Activated CD8-positive, alpha-beta T cell treated with anti-CD3 and anti-CD28 coated beads for 36 hours (primary cell): ENCODE measurements at regions of chr6 and their contacts with region 1.

Region 1: DNA sequence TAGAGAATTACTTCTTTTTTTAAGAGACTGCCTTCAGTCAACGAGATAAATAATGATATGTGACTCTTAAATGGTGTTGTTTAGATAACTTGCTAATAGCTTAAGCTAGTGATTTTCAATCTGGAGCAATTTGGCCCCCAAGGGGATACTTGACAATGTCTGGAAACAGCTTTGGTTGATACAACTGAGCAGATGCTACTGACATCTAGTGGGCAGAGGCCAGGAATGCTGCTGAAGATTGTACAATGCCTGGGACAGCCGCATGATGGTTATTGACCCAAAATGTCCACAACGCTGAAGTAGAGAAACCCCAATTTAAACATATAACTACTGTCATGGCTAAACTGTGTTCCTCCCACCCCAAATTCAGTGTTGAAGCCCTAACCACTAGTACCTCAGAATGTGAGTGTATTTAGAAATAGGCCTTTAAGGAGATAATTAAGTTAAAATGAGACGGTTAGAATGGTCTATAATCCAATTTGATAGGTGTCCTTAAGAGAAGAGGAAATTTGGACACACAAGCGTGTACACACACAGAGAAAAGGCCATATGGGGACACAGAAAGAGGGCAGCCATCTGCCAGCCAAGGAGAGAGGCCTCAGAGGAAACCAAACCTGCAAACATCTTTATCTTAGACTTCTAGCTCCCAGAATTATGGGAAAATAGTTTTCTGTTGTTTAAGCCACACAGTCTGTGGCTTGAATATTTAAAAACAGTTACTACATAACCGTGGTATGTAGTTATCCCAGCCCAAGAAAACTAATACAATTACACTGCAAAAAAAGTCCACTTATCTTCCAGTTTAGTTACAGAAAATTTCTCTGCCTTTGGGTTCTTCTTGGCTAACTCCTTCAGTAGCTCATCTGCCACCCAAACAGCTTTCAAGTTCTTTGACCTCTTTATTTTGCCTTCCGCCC is 22.2 kb downstream of the RWDD2A start:
- DNase-seq: peak; percentile 79
- ATAC-seq: peak; percentile 99
- H3K4me3 Mint-ChIP-seq: no peak overlapping the region
- H3K27ac Mint-ChIP-seq: no peak overlapping the region
- H3K4me1 Mint-ChIP-seq: no peaks in the 10 kb centered on the region
- H3K27me3 Mint-ChIP-seq: peaks cover 6% of the 10 kb centered on the region
- CTCF ChIP-seq: peak; percentile 74

Region 2: GRCh38 chr6:82270881-82271645 is 944.3 kb before region 1 on chr6:
- CTCF ChIA-PET with region 1: interaction called, 10 read pairs
- POLR2A ChIA-PET with region 1: no interaction called
- intact Hi-C with region 1: loop called (anchors 10 kb)
- DNase-seq: no peak
- ATAC-seq: peak; percentile 34
- H3K4me3 Mint-ChIP-seq: no peak overlapping the region
- H3K27ac Mint-ChIP-seq: no peak overlapping the region
- H3K4me1 Mint-ChIP-seq: no peaks in the 10 kb centered on the region
- H3K27me3 Mint-ChIP-seq: no peaks in the 10 kb centered on the region
- CTCF ChIP-seq: peak; percentile 73

Region 3: DNA sequence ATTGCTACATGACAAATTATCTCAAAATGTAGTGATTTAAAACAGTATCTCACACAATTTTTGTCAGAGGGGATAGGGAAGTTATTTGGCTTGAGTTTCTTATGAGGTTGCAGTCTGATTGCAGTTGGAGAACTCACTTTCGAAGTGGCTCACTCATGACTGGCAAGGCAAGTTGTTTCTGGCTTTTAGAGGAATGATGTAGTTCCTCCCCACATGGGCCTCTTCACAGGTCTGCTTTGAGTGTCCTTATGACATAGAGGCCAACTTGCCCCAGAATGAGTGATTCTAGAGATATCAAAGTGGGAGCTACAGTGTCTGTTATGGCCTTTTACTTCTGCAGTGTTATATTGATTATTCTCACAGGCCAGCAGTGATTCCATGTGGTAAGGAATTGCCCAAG is 141.8 kb before region 1 on chr6:
- CTCF ChIA-PET with region 1: interaction called, 187 read pairs
- POLR2A ChIA-PET with region 1: no interaction called
- intact Hi-C with region 1: no loop called
- DNase-seq: no peak
- ATAC-seq: no peak
- H3K4me3 Mint-ChIP-seq: no peak overlapping the region
- H3K27ac Mint-ChIP-seq: no peak overlapping the region
- H3K4me1 Mint-ChIP-seq: peaks cover 36% of the 10 kb centered on the region
- H3K27me3 Mint-ChIP-seq: no peaks in the 10 kb centered on the region
- CTCF ChIP-seq: no peak

Region 4: DNA sequence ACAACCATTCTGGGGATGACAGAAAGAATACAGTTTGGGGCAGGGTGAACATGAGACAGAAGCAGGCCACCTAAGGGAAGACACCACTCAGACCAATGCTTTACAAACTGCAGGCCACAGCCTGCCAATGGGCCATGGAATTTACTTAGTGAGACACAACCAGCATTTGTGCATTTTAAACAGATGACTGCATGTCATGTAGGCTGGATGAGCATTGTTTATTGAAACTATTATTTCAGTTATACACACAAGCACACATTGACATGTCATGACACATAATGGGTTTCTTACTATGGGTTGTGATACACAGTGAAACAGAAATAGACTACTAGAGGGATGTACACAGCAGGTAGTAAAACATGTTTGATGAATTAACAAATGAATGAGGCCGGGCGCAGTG is 30.3 kb before region 1 on chr6:
- CTCF ChIA-PET with region 1: interaction called, 11 read pairs
- POLR2A ChIA-PET with region 1: no interaction called
- intact Hi-C with region 1: no loop called
- DNase-seq: no peak
- ATAC-seq: no peak
- H3K4me3 Mint-ChIP-seq: no peak overlapping the region
- H3K27ac Mint-ChIP-seq: no peak overlapping the region
- H3K4me1 Mint-ChIP-seq: peaks cover 15% of the 10 kb centered on the region
- H3K27me3 Mint-ChIP-seq: no peaks in the 10 kb centered on the region
- CTCF ChIP-seq: no peak

Region 5: GRCh38 chr6:83192871-83193746 is 22.3 kb before region 1 on chr6 and contains the starts of genes PGM3 and RWDD2A:
- CTCF ChIA-PET with region 1: interaction called, 11 read pairs
- POLR2A ChIA-PET with region 1: no interaction called
- intact Hi-C with region 1: no loop called
- DNase-seq: peak; percentile 89
- ATAC-seq: peak; percentile 98
- H3K4me3 Mint-ChIP-seq: peak within 1 kb of the TSS; percentile 96
- H3K27ac Mint-ChIP-seq: peak within 1 kb of the TSS; percentile 91
- H3K4me1 Mint-ChIP-seq: peaks cover 48% of the 10 kb centered on the region
- H3K27me3 Mint-ChIP-seq: no peaks in the 10 kb centered on the region
- CTCF ChIP-seq: no peak
- total RNA-seq, gene PGM3: 13.2 to 17.5 TPM
- total RNA-seq, gene RWDD2A: 1.5 to 1.6 TPM

Region 6: DNA sequence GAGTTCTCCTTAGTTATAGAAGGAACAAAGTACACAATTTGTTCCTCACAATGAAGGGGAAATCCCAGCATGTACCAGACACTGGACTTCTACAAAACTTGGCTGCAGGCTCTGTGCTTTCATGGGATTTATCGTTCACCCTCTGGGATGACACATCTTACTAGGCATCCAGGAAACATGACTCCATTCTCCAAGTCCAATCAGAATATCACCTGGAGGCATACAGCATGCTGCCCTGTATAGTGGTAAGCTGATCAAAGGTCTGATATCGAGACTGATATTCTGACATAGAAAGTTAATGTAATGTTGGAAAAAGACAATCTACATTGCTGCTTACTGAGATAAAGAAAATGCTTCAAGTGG is 15.5 kb before region 1 on chr6:
- CTCF ChIA-PET with region 1: interaction called, 15 read pairs
- POLR2A ChIA-PET with region 1: no interaction called
- intact Hi-C with region 1: no loop called
- DNase-seq: no peak
- ATAC-seq: no peak
- H3K4me3 Mint-ChIP-seq: no peak overlapping the region
- H3K27ac Mint-ChIP-seq: no peak overlapping the region
- H3K4me1 Mint-ChIP-seq: peaks cover 15% of the 10 kb centered on the region
- H3K27me3 Mint-ChIP-seq: no peaks in the 10 kb centered on the region
- CTCF ChIP-seq: no peak

Region 7: DNA sequence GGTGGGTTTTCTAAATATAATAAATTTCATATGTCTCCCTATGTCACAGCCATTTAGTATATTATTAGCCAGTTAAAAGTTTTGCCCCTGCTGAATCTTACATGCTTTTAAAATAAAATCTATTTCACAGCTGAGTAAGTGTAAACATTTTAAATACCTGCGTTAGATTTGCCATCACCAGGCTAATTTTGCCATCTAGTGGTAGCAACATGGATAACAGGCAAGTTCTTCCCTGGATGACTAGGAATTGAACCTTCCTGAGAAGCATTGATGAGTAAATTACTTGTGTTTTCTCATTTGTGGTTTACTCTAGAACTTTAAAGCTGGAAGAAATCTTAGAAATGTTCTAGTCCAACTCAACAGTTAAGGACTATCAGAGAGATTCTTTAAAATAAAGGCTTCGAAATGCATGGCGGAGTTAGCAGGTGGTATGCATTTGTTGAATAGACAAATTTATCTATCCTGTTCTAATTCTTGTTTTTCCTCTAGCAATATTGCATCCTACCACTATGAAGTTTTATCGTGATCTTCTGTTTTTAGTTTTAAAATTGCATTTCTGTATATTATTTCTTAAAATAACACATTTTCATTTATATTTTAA is 299.6 kb after region 1 on chr6:
- CTCF ChIA-PET with region 1: interaction called, 156 read pairs
- POLR2A ChIA-PET with region 1: no interaction called
- intact Hi-C with region 1: no loop called
- DNase-seq: peak; percentile 12
- ATAC-seq: peak; percentile 42
- H3K4me3 Mint-ChIP-seq: no peak overlapping the region
- H3K27ac Mint-ChIP-seq: no peak overlapping the region
- H3K4me1 Mint-ChIP-seq: peaks cover 6% of the 10 kb centered on the region
- H3K27me3 Mint-ChIP-seq: peaks cover 23% of the 10 kb centered on the region
- CTCF ChIP-seq: peak; percentile 77